PC-9 (cell line): ENCODE measurements at regions of chr3 and their contacts with region 1.

Region 1: DNA sequence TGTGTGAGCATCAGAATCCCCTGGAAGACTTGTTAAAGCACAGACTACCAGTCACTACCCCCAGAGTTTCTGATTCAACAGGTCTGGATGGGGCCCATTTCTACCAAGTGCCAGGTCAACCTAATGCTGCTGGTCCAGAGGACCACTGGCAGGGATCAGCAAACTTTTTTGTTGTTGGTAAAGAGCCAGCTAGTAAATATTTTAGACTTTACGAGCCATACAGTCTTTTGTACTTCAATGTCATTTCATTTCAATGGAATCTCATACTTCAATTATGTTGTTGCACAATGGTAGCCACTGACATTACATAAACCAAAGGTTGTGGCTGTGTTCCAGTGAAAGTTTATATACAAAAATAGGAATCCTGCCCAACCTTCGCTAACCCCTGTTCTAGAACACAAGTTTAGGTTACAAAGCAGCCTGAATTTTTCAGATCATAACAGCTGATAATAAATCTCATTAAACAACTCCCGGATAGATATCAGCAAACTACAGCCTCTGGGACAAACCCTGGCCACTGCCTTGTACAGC is 28.7 kb downstream of the ULK4 start:
- DNase-seq: peak; percentile 29 to 92
- H3K4me3 ChIP-seq: no peak overlapping the region
- H3K27ac ChIP-seq: no peak overlapping the region
- H3K4me1 ChIP-seq: peaks cover 23% of the 10 kb centered on the region
- H3K27me3 ChIP-seq: no peaks in the 10 kb centered on the region
- CTCF ChIP-seq: no peak

Region 2: GRCh38 chr3:41900265-41900664 is 32.9 kb before region 1 on chr3:
- CTCF ChIA-PET with region 1: no interaction called
- POLR2A ChIA-PET with region 1: interaction called, 11 read pairs
- intact Hi-C with region 1: no loop called
- DNase-seq: peak; percentile 24 to 47
- H3K4me3 ChIP-seq: no peak overlapping the region
- H3K27ac ChIP-seq: no peak overlapping the region
- H3K4me1 ChIP-seq: 0 out of 2 replicates have a peak, but pooled peaks cover 5% of the 10 kb centered on the region
- H3K27me3 ChIP-seq: no peaks in the 10 kb centered on the region
- CTCF ChIP-seq: no peak

Region 3: GRCh38 chr3:41991399-41991798 is 58.2 kb after region 1 on chr3:
- CTCF ChIA-PET with region 1: no interaction called
- POLR2A ChIA-PET with region 1: no interaction called
- intact Hi-C with region 1: loop called (anchors 1 kb)
- DNase-seq: peak; percentile 57 to 77
- H3K4me3 ChIP-seq: no peak overlapping the region
- H3K27ac ChIP-seq: peak overlapping the region; percentile 43; the same call in 1 of the 2 replicates
- H3K4me1 ChIP-seq: peaks cover 29% of the 10 kb centered on the region
- H3K27me3 ChIP-seq: no peaks in the 10 kb centered on the region
- CTCF ChIP-seq: no peak